ENCODE measurements at regions of chr16 and their contacts with region 1.

Region 1: GRCh38 chr16:75471723-75472633 is 7.5 kb upstream of the TMEM170A start:
- DNase-seq: peak in 17 of 35 experiments; percentile 5 to 69 (median 18)
- ATAC-seq: peak; percentile 83 to 90 (median 88)
- H3K4me3 ChIP-seq: no peak overlapping the region
- H3K4me3 Mint-ChIP-seq: no peak overlapping the region
- H3K27ac ChIP-seq: no peak overlapping the region
- H3K27ac Mint-ChIP-seq: no peak overlapping the region
- H3K4me1 ChIP-seq: peaks cover 0 to 3% of the 10 kb centered on the region in 2 experiments
- H3K4me1 Mint-ChIP-seq: peaks cover 0 to 6% (median 3%) of the 10 kb centered on the region in 3 donors
- H3K27me3 ChIP-seq: peaks cover 0 to 3% of the 10 kb centered on the region in 2 experiments
- H3K27me3 Mint-ChIP-seq: peaks cover 2 to 3% of the 10 kb centered on the region in 2 donors

Region 2: DNA sequence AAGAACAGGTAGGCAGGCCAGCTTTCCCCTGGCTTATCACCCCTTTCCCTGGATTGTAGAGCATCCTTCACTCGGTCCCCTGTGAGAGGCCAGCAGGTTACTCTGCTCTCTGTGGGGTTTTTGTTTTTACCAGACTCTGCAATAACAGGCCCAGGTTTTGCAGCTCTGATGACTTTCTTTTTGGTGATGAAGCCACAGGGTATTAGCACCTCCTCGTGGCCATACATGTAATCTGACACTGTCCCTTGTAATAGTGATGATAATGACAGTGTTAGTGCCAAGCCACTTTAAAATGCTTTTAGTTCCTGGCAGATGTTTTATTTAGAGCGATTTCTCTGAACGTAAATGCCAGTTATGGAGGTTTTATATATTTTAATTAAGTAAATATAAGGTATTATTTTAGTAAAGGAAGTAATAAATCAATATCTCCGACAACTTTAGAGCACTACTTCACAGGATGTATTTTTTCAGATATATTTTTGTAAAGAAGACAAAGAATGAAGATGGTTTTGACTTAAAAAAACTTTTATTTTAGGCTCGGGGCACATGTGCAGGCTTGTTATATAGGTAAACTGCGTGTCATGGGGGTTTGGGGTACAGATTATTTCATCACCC is 292.3 kb after region 1 on chr16:
- CTCF ChIA-PET with region 1: interaction called, 3 to 27 read pairs
- POLR2A ChIA-PET with region 1: no interaction called
- DNase-seq: peak; percentile 12 to 84 (median 46)
- ATAC-seq: peak; percentile 85 to 99 (median 94)
- H3K4me3 ChIP-seq: no peak overlapping the region
- H3K4me3 Mint-ChIP-seq: no peak overlapping the region
- H3K27ac ChIP-seq: no peak overlapping the region
- H3K27ac Mint-ChIP-seq: peak overlapping the region in 1 of 2 donors; percentile 39
- H3K4me1 ChIP-seq: peaks cover 0 to 2% of the 10 kb centered on the region in 2 experiments
- H3K4me1 Mint-ChIP-seq: peaks cover 0 to 9% (median 0%) of the 10 kb centered on the region in 3 donors
- H3K27me3 ChIP-seq: no peaks in the 10 kb centered on the region
- H3K27me3 Mint-ChIP-seq: peaks cover 8 to 19% of the 10 kb centered on the region in 2 donors

Measured in T-cell (primary cell).